ENCODE measurements at regions of chr6 and their contacts with region 1.

Region 1: DNA sequence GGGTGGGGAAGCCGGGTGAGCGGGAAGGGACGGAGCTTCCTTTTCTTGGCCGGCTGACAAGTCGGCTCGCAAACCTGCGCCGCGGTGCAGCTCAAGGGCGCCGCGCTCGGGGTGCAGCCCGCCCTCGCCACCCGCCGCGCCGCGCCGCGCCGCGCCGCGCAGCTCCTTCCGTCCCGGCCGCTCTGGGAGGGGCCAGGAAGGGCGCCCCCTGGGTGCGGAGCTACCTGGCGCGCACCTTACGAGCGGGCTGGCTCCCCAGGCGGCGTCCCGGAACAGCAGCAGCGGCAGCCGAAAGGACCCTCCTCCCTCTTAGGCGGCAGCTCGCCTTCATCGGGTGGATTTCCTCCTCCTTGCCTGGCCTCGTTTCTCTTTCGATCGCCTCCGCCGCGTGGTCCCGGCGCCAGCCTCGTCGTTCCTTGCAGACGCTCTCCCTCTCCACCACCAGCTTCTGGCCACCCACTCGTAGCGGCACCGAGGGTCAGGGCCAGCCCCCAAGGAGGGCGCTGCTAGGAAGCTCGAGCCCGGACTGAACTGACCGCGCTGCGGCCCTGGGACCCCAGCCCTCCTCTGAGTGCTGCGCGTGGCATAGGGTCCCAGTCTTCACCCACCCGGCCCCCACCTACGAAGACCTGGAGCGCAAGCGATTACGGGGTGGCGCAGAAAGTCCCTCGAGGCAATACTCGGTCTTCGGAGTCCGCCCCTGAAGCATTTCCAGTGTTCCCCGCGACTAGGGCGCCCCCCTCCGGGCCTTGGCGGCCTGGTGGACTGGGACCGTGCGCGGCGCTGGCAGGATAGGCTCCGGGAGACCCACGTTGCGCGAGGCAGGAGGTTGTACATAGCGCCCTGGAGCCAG is at the start of gene MAP3K5:
- DNase-seq: peak; percentile 89
- H3K4me3 ChIP-seq: peak within 1 kb of the TSS; percentile 60 to 86 (median 70)
- H3K27ac ChIP-seq: peak within 1 kb of the TSS; percentile 51
- H3K4me1 ChIP-seq: peaks cover 16% of the 10 kb centered on the region
- H3K27me3 ChIP-seq: no peaks in the 10 kb centered on the region
- CTCF ChIP-seq: peak; percentile 85 to 93
- POLR2A ChIP-seq: peak; percentile 23
- total RNA-seq, gene MAP3K5: 5.0 and 7.0 TPM in 2 replicates

Region 2: GRCh38 chr6:136371959-136372358 is 420.7 kb before region 1 on chr6:
- CTCF ChIA-PET with region 1: no interaction called
- POLR2A ChIA-PET with region 1: no interaction called
- dilution Hi-C with region 1: no loop called
- intact Hi-C with region 1: no loop called
- DNase-seq: no peak
- H3K4me3 ChIP-seq: no peak overlapping the region
- H3K27ac ChIP-seq: no peak overlapping the region
- H3K4me1 ChIP-seq: no peaks in the 10 kb centered on the region
- H3K27me3 ChIP-seq: peaks cover 10 to 14% of the 10 kb centered on the region in 2 experiments
- CTCF ChIP-seq: no peak
- POLR2A ChIP-seq: no peak

Region 3: GRCh38 chr6:136582711-136583471 is 209.7 kb before region 1 on chr6:
- CTCF ChIA-PET with region 1: interaction called, 33 read pairs
- POLR2A ChIA-PET with region 1: no interaction called
- dilution Hi-C with region 1: no loop called
- intact Hi-C with region 1: loop called (anchors 1 kb)
- DNase-seq: peak; percentile 77
- H3K4me3 ChIP-seq: no peak overlapping the region
- H3K27ac ChIP-seq: peak overlapping the region; percentile 89
- H3K4me1 ChIP-seq: peaks cover 4% of the 10 kb centered on the region
- H3K27me3 ChIP-seq: no peaks in the 10 kb centered on the region
- CTCF ChIP-seq: peak; percentile 26 to 31
- POLR2A ChIP-seq: no peak

Region 4: DNA sequence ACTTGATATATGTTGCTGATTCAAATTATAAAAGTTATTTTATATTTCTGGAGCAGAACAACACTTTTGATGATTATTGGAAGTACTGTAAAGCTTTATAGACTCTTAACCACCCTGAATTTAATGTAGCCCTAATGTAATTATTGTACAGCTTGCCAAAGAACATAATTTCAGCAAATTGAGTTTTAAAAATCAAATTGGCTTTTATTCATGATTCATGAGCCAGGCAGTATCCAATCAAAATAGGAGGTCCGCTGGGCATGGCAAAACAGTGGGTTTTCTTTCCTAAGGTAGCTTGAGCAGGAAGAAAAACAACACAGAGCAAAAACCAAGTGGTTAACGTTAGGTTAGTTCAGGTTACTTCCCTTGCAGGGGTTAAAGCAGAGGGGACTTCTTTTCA is 177.6 kb before region 1 on chr6:
- CTCF ChIA-PET with region 1: interaction called, 20 read pairs
- POLR2A ChIA-PET with region 1: no interaction called
- dilution Hi-C with region 1: no loop called
- intact Hi-C with region 1: no loop called
- DNase-seq: peak; percentile 3
- H3K4me3 ChIP-seq: no peak overlapping the region
- H3K27ac ChIP-seq: no peak overlapping the region
- H3K4me1 ChIP-seq: peaks cover 19% of the 10 kb centered on the region
- H3K27me3 ChIP-seq: no peaks in the 10 kb centered on the region
- CTCF ChIP-seq: no peak
- POLR2A ChIP-seq: no peak

Region 5: GRCh38 chr6:136652656-136653055 is 140.0 kb before region 1 on chr6:
- CTCF ChIA-PET with region 1: interaction called, 708 read pairs
- POLR2A ChIA-PET with region 1: interaction called, 3 read pairs
- dilution Hi-C with region 1: no loop called
- intact Hi-C with region 1: no loop called
- DNase-seq: no peak
- H3K4me3 ChIP-seq: no peak overlapping the region
- H3K27ac ChIP-seq: no peak overlapping the region
- H3K4me1 ChIP-seq: peaks cover 4% of the 10 kb centered on the region
- H3K27me3 ChIP-seq: no peaks in the 10 kb centered on the region
- CTCF ChIP-seq: no peak
- POLR2A ChIP-seq: no peak

Region 6: GRCh38 chr6:136723780-136724179 is 68.9 kb before region 1 on chr6:
- CTCF ChIA-PET with region 1: interaction called, 62 read pairs
- POLR2A ChIA-PET with region 1: no interaction called
- dilution Hi-C with region 1: no loop called
- intact Hi-C with region 1: no loop called
- DNase-seq: peak; percentile 67
- H3K4me3 ChIP-seq: no peak overlapping the region
- H3K27ac ChIP-seq: no peak overlapping the region
- H3K4me1 ChIP-seq: no peaks in the 10 kb centered on the region
- H3K27me3 ChIP-seq: no peaks in the 10 kb centered on the region
- CTCF ChIP-seq: no peak
- POLR2A ChIP-seq: no peak

Region 7: GRCh38 chr6:136803608-136804007 is 11.0 kb after region 1 on chr6:
- CTCF ChIA-PET with region 1: interaction called, 16 read pairs
- POLR2A ChIA-PET with region 1: no interaction called
- dilution Hi-C with region 1: no loop called
- intact Hi-C with region 1: no loop called
- DNase-seq: no peak
- H3K4me3 ChIP-seq: no peak overlapping the region
- H3K27ac ChIP-seq: no peak overlapping the region
- H3K4me1 ChIP-seq: no peaks in the 10 kb centered on the region
- H3K27me3 ChIP-seq: no peaks in the 10 kb centered on the region
- CTCF ChIP-seq: no peak
- POLR2A ChIP-seq: no peak

Measured in endothelial cell of umbilical vein (primary cell).